B cell (primary cell): ENCODE measurements at regions of chrX and their contacts with region 1.

Region 1: GRCh38 chrX:106611679-106612392 is at the start of gene RADX:
- DNase-seq: peak; percentile 90
- ATAC-seq: peak; percentile 93
- H3K4me3 ChIP-seq: peak within 1 kb of the TSS in 4 of 5 experiments; percentile 67 to 77 (median 69)
- H3K4me3 Mint-ChIP-seq: peak within 1 kb of the TSS; percentile 97
- H3K27ac ChIP-seq: peak within 1 kb of the TSS; percentile 69 to 77
- H3K27ac Mint-ChIP-seq: peak within 1 kb of the TSS; percentile 90
- H3K4me1 ChIP-seq: peaks cover 0 to 3% of the 10 kb centered on the region in 2 donors
- H3K4me1 Mint-ChIP-seq: peaks cover 18% of the 10 kb centered on the region
- H3K27me3 ChIP-seq: no peaks in the 10 kb centered on the region
- H3K27me3 Mint-ChIP-seq: no peaks in the 10 kb centered on the region
- CTCF ChIP-seq: no peak
- total RNA-seq, gene RADX: 13.0 and 15.3 TPM in 2 replicates

Region 2: DNA sequence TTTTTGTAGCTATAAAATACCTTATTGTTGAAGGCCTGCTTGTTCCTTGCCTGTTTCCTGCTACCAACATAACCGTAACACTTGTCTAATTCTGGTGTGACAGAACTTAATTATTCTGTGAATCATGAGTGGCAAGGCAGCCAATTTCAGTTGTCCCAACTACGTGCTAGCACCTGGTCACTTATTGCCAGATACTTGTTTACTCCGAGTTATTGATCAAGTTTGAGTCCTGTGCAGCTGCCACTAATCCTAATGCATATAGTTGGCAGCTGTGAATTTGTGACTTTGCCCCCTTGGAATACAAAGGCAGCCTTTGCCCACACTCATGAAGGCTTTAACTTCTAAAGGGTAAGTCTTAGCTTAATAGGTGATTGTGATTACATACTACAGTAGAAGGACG is 106.9 kb after region 1 on chrX:
- CTCF ChIA-PET with region 1: no interaction called
- POLR2A ChIA-PET with region 1: no interaction called
- intact Hi-C with region 1: no loop called
- DNase-seq: no peak
- ATAC-seq: no peak
- H3K4me3 ChIP-seq: no peak overlapping the region
- H3K4me3 Mint-ChIP-seq: no peak overlapping the region
- H3K27ac ChIP-seq: no peak overlapping the region
- H3K27ac Mint-ChIP-seq: no peak overlapping the region
- H3K4me1 ChIP-seq: no peaks in the 10 kb centered on the region
- H3K4me1 Mint-ChIP-seq: no peaks in the 10 kb centered on the region
- H3K27me3 ChIP-seq: no peaks in the 10 kb centered on the region
- H3K27me3 Mint-ChIP-seq: peaks cover 3% of the 10 kb centered on the region
- CTCF ChIP-seq: no peak

Region 3: GRCh38 chrX:106802387-106803275 is 190.8 kb after region 1 on chrX and contains the start of gene TBC1D8B:
- CTCF ChIA-PET with region 1: no interaction called
- POLR2A ChIA-PET with region 1: no interaction called
- intact Hi-C with region 1: loop called (anchors 5 kb)
- DNase-seq: peak; percentile 39
- ATAC-seq: peak; percentile 93
- H3K4me3 ChIP-seq: peak within 1 kb of the TSS; percentile 34 to 71 (median 51)
- H3K4me3 Mint-ChIP-seq: peak within 1 kb of the TSS; percentile 94
- H3K27ac ChIP-seq: no peak within 1 kb of the TSS
- H3K27ac Mint-ChIP-seq: peak within 1 kb of the TSS; percentile 66
- H3K4me1 ChIP-seq: peaks cover 16 to 18% of the 10 kb centered on the region in 2 donors
- H3K4me1 Mint-ChIP-seq: peaks cover 26% of the 10 kb centered on the region
- H3K27me3 ChIP-seq: peaks cover 0 to 12% (median 3%) of the 10 kb centered on the region in 4 experiments
- H3K27me3 Mint-ChIP-seq: peaks cover 5% of the 10 kb centered on the region
- CTCF ChIP-seq: no peak
- total RNA-seq, gene TBC1D8B: 8.4 and 9.1 TPM in 2 replicates

Region 4: DNA sequence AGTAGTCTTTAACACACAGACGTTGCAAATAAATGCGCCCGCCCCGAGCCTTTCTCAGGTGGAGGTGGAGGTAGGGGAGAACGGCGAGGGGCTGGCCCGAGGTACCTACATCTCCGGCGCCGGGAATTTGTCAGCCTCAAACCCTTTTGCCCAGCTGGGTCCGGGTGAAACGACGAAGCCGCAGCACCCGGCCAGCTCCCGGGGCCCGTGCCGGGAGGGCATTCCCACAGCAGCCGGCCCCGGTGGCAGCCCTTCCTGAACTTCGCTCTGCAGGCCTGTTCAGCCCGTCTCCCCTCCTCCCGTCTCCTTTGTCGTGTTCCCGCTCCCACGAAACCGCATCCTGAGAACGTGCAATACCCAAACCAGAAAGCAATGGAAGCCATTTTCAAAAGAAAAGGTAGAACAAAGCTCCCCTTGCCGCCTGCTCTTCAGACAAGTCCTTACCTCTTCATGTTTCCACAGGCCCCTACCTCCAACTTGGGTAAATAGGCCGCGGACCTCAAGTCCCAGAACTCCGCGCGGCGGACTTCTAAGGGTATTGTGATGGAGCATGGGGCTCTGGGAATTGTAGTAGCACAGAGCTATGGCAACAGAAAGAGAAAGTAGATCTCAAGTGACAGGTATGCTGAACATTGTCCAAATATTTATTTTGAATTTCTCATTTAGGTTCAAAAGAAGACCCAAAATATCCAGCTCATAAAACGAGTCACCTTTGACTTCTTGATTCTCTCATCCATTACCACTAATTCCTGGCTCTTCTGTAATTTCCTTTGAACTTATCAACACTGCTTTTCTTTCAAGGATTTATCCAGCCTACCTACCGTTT is 506.7 kb after region 1 on chrX and contains the start of gene RBM41:
- CTCF ChIA-PET with region 1: no interaction called
- POLR2A ChIA-PET with region 1: no interaction called
- intact Hi-C with region 1: loop called (anchors 2 kb)
- DNase-seq: peak; percentile 81
- ATAC-seq: peak; percentile 100
- H3K4me3 ChIP-seq: peak within 1 kb of the TSS; percentile 54 to 78 (median 70)
- H3K4me3 Mint-ChIP-seq: peak within 1 kb of the TSS; percentile 100
- H3K27ac ChIP-seq: peak within 1 kb of the TSS; percentile 50 to 73
- H3K27ac Mint-ChIP-seq: peak within 1 kb of the TSS; percentile 97
- H3K4me1 ChIP-seq: peaks cover 0 to 7% of the 10 kb centered on the region in 2 donors
- H3K4me1 Mint-ChIP-seq: peaks cover 28% of the 10 kb centered on the region
- H3K27me3 ChIP-seq: no peaks in the 10 kb centered on the region
- H3K27me3 Mint-ChIP-seq: no peaks in the 10 kb centered on the region
- CTCF ChIP-seq: no peak
- total RNA-seq, gene RBM41: 32.5 and 36.5 TPM in 2 replicates